ENCODE measurements at regions of chr11 and their contacts with region 1.

Region 1: DNA sequence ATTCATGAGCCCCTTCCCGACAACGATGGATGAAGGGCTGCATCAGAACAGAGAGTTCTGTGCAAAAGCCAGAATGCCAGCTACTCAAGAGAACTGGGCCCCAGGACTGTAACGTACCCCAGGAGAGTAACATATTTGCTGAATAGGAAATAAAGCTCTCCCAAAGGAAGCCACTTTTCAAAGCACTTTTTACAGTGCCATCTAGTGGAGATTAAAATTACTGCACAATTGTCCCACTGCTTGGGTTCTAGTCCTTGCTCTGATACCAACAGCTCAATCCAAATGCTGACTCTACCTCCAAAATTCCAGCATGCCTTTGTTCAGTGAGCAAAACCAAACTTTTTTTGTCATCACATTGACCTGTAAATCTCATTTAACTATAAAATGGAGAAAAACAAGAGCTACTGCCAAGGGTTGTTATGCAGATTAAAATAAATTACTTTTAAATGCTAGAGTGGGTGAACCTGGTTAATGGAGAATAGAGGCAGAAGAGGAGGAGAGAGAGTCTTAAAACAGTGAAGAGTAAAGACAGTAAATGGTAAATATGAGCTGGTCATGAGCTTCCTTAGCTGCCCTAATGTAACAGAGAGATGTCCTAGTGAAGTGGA is 87.6 kb upstream of the FSHB start:
- H3K4me3 ChIP-seq: no peak overlapping the region
- H3K27ac ChIP-seq: no peak overlapping the region
- H3K4me1 ChIP-seq: no peaks in the 10 kb centered on the region
- CTCF ChIP-seq: no peak

Region 2: DNA sequence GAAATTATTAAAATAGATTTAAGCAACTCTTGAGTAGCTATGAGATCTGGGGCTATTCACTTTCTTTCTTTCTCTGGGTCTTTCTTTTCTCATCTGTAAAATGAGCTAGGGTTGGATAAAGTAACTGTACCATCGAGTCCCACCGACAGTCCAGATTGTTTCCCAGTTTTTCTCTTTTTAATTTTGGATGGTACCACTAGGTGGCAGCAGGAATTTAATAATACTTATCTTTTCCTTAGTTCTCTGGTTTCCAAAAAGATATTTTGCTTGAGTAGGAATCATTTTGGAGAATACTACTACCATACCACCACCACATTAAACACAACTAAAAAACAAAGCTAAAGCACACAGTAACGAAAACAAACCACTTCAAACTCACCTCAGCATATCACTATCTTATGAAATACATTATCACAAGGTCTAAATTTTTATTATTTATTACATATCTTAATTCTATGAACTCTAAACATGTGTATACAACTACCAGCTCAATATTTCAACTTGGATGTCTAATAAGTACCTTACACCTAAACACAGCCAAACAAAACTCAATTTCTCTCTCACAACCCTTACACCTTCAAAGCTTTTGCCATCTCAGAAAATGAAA is 710.4 kb before region 1 on chr11:
- CTCF ChIA-PET with region 1: interaction called, 13 read pairs
- POLR2A ChIA-PET with region 1: no interaction called
- H3K4me3 ChIP-seq: no peak overlapping the region
- H3K27ac ChIP-seq: no peak overlapping the region
- H3K4me1 ChIP-seq: no peaks in the 10 kb centered on the region
- CTCF ChIP-seq: no peak

Region 3: DNA sequence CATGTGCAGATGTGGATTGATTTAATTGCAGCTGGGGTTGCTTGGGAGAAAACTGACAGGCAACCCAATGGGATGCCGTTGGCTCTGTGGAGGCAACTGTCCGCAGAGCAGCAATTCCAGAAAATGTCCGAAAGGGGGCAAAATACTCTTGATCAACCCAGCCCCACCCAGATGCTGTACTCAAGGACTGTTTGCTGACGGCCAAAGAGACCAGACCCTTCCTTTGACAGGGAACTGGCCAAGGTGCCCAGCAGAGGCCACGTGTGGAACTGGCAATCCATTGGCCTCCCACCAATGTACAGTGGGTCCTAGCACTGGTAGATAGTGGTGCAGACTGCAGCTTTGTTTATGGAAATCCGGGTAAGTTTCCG is 96.6 kb before region 1 on chr11:
- CTCF ChIA-PET with region 1: interaction called, 10 read pairs
- POLR2A ChIA-PET with region 1: no interaction called
- H3K4me3 ChIP-seq: no peak overlapping the region
- H3K27ac ChIP-seq: no peak overlapping the region
- H3K4me1 ChIP-seq: no peaks in the 10 kb centered on the region
- CTCF ChIP-seq: no peak

Region 4: GRCh38 chr11:30155428-30155827 is 12.2 kb after region 1 on chr11:
- CTCF ChIA-PET with region 1: interaction called, 28 read pairs
- POLR2A ChIA-PET with region 1: no interaction called
- H3K4me3 ChIP-seq: no peak overlapping the region
- H3K27ac ChIP-seq: no peak overlapping the region
- H3K4me1 ChIP-seq: no peaks in the 10 kb centered on the region
- CTCF ChIP-seq: no peak

Region 5: DNA sequence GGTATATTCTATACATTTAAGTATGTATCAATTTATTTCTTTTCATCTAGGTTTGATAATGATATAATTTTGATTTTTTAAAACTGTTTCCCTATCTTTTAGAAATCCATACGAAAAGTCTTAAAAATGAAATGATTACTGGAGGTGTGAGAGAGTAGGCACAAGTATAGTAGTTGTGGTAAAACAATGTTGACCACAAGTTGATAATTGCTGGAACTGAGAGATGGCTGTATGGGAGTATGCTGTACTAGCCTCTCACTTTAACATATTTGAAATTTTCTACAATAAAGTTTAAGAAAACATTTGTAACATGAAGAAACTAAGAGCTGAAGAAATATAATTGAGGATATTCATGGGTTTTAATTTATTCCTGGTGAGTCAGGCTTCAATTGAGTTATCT is 117.6 kb after region 1 on chr11:
- CTCF ChIA-PET with region 1: no interaction called
- POLR2A ChIA-PET with region 1: no interaction called
- H3K4me3 ChIP-seq: no peak overlapping the region
- H3K27ac ChIP-seq: no peak overlapping the region
- H3K4me1 ChIP-seq: no peaks in the 10 kb centered on the region
- CTCF ChIP-seq: no peak

Region 6: DNA sequence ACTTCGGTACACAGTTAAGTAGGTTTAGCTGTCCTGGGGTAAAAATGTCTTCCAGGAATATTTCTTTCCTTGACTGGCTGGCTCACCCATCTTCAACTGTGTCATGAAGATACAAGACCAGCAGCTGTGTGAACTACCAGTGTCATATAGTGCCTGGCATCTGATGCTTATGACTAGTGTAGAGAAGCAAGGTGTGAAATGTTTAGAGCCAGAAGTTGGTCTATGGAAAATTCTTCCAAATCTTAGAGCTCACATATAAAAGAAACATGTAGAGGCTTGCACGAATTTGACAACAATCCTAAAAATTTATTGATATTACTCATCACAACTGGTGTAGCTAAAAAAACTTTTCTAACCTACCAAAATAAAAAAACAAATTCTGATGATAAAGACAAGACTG is 234.1 kb after region 1 on chr11:
- CTCF ChIA-PET with region 1: no interaction called
- POLR2A ChIA-PET with region 1: no interaction called
- H3K4me3 ChIP-seq: no peak overlapping the region
- H3K27ac ChIP-seq: no peak overlapping the region
- H3K4me1 ChIP-seq: no peaks in the 10 kb centered on the region
- CTCF ChIP-seq: no peak

Measured in HEK293 (cell line).